Thyroid gland (tissue), 4 donors: ENCODE measurements at regions of chr1 and their contacts with region 1.

Region 1: DNA sequence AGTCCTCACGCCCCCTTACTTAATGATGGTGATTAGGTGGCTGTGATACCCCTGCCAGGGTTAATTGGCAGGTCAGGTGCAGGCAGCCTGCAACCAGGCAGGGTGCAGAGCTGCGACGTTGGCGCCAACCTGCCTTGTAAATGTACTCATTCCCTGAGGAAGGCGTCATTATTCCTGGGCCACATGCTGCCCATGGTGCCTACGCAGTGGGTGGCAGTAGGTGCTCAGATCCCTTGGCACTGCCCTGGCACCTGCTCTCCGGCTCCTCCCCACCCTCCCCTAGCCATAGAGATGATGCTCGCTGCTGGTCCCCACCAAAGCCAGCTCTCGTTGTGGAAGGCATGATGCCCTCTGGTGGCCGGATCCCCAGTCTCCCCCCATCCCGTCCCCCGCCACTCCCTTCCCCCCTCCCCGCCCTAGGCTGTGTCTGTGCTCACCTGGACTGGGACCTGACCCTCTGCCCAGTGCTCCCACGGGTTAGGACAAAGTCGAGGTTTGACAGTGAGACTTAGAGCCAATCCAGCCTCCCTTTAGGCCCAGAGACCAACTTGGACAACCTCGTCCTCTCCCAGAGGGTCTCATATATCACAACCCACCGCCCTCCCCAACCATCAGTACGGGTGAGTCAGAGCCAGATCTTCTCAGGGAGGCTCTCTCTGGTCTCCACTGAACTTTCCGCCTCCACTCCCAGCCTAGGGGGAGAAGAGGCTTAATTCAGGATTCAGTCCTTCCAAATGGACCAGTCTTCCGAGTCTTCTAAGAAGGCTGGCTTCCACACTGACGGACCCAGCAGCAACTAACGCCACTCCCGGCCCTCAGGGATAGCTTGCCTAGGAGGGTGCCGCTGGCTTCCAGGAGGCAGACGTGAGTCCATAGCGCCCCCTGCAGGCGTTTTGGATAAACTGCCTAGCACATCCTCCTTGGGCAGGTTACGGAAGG is 5.7 kb downstream of the KRTCAP2 start:
- DNase-seq: peak; percentile 83
- H3K4me3 ChIP-seq: no peak overlapping the region
- H3K27ac ChIP-seq: peak overlapping the region in 2 of 3 donors; percentile 6 to 32
- H3K4me1 ChIP-seq: peaks cover 4 to 17% of the 10 kb centered on the region in 2 donors
- H3K27me3 ChIP-seq: no peaks in the 10 kb centered on the region
- CTCF ChIP-seq: peak; percentile 72 to 93 (median 87)
- POLR2A ChIP-seq: no peak

Region 2: DNA sequence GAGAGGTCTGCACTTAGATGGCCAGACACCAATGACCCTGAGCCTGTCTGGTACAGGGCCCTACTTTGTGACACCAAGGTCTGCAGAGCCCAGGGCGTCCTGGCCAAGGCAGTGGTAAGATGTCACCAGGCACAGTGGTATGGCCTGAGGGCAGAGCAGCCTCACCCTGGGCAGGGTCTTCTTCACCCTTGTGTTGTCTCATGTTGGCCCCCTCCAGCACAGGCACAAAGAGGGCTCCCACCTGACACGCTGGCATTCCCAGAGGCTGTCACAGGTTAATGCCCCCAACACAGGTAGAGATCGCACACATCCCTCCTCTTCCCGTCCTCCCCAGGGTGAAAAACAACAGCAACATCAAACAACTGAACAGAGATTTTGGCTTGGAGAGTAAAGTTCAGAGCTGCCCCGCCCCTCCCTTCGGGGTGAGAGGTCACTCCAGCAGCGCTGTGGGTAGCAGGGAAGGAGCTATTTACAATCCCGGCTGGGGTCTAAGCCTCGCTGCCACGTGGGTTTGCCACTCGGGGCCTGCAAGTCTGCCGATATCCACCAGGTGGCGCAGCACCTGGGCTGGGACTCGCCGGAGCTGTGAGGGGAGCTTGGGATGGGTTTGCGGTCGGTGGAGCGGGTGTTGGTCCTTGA is 76.2 kb before region 1 on chr1:
- intact Hi-C with region 1: loop called (anchors 2 kb)
- DNase-seq: peak; percentile 74 to 80
- H3K4me3 ChIP-seq: no peak overlapping the region
- H3K27ac ChIP-seq: no peak overlapping the region
- H3K4me1 ChIP-seq: peaks cover 9 to 36% of the 10 kb centered on the region in 2 donors
- H3K27me3 ChIP-seq: no peaks in the 10 kb centered on the region
- CTCF ChIP-seq: peak; percentile 91 to 99 (median 95)
- POLR2A ChIP-seq: no peak

Region 3: DNA sequence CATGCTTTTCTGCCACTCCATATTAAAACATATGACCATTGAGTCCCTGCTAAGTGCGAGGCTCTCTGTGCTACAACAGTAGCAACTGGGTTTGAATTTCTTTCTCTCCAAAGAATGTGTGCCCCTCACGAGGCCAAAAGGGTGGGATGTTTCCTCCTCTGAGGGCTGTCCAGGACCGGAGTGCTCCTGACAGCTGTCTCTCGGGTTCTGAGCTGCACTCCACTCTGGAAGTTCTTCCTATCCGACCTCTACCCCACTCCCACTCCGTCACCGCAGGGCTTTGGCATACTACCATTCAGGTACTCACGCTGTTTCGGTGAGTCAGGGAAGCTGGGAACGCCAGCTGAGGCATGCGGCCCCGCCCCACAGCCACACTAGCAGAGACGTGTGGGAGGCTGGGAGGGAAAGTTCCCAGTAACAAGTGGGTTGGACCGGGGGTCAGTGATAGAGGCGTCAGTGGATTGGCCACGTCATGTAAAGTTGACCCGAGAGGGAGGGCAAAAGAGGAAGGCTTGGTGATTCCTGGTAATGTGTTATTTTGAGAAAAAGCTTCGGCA is 32.5 kb before region 1 on chr1:
- intact Hi-C with region 1: loop called (anchors 5 kb)
- DNase-seq: peak; percentile 96 to 97
- H3K4me3 ChIP-seq: peak overlapping the region in 2 of 3 donors; percentile 58 to 64
- H3K27ac ChIP-seq: peak overlapping the region; percentile 87 to 98 (median 96)
- H3K4me1 ChIP-seq: peaks cover 55 to 70% of the 10 kb centered on the region in 2 donors
- H3K27me3 ChIP-seq: no peaks in the 10 kb centered on the region
- CTCF ChIP-seq: no peak
- POLR2A ChIP-seq: no peak